Ovary (tissue), 10 donors: ENCODE measurements at regions of chr3 and their contacts with region 1.

Region 1: GRCh38 chr3:10764259-10765051 is 51.6 kb upstream of the SLC6A11 start:
- DNase-seq: no peak
- H3K4me3 ChIP-seq: no peak overlapping the region
- H3K27ac ChIP-seq: no peak overlapping the region
- H3K4me1 ChIP-seq: no peaks in the 10 kb centered on the region
- H3K27me3 ChIP-seq: no peaks in the 10 kb centered on the region
- CTCF ChIP-seq: no peak
- EP300 ChIP-seq: no peak
- POLR2A ChIP-seq: no peak

Region 2: DNA sequence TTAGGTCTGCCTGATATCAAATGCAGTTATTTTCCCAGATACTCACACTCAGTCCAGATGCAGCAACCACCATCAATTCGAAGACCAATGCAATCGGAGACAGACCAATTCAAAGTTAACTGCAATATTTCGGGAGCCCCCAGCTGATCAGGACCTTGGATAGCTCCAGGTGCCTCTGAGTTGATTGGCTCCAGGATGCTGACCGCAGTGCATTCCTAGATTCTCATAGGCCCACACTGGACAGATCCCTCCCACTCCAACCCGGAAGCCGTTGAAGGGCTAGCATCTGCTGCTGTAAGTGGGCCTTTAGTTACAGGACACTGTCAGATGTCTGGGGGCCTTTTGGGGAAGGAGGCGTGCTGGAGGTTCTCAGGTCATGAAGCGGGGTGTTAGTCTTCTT is 169.5 kb before region 1 on chr3:
- intact Hi-C with region 1: no loop called
- DNase-seq: peak in 2 of 5 donors; percentile 17 to 34
- H3K4me3 ChIP-seq: no peak overlapping the region
- H3K27ac ChIP-seq: no peak overlapping the region
- H3K4me1 ChIP-seq: no peaks in the 10 kb centered on the region
- H3K27me3 ChIP-seq: no peaks in the 10 kb centered on the region
- CTCF ChIP-seq: no peak
- EP300 ChIP-seq: no peak
- POLR2A ChIP-seq: no peak

Region 3: DNA sequence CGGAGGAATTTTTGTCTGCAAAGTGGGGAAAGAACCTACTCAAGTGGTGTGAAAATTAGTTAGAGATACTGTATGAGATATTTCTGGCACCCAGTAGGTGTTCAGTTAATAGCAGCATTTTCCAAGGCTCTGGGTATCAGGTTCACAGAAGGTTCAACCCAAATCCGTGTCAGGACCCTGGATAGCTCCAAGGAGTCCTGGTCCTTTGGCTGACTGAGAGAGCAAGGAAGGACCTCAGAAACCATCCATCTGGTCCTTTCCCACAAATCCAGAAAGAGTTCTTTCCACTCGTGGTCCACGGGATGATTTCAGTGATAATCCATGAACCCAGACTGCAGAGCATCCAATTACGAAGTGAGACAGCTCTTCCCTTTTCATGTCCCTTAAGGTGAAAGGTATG is 102.9 kb after region 1 on chr3:
- intact Hi-C with region 1: no loop called
- DNase-seq: no peak
- H3K4me3 ChIP-seq: no peak overlapping the region
- H3K27ac ChIP-seq: no peak overlapping the region
- H3K4me1 ChIP-seq: no peaks in the 10 kb centered on the region
- H3K27me3 ChIP-seq: no peaks in the 10 kb centered on the region
- CTCF ChIP-seq: no peak
- EP300 ChIP-seq: no peak
- POLR2A ChIP-seq: no peak

Region 4: GRCh38 chr3:11335056-11335608 is 570.7 kb after region 1 on chr3:
- intact Hi-C with region 1: loop called in 1 of 4 experiments (anchors 10 kb)
- DNase-seq: no peak
- H3K4me3 ChIP-seq: no peak overlapping the region
- H3K27ac ChIP-seq: no peak overlapping the region
- H3K4me1 ChIP-seq: no peaks in the 10 kb centered on the region
- H3K27me3 ChIP-seq: no peaks in the 10 kb centered on the region
- CTCF ChIP-seq: peak; percentile 42 to 72 (median 68)
- EP300 ChIP-seq: no peak
- POLR2A ChIP-seq: no peak